Activated CD4-positive, alpha-beta memory T cell treated with anti-CD3 and anti-CD28 coated beads for 36 hours (primary cell): ENCODE measurements at regions of chr20 and their contacts with region 1.

Region 1: GRCh38 chr20:35092524-35093266 is at the start of gene TRPC4AP:
- DNase-seq: peak; percentile 93
- H3K4me3 Mint-ChIP-seq: peak within 1 kb of the TSS; percentile 84
- H3K27ac Mint-ChIP-seq: peak within 1 kb of the TSS; percentile 96
- H3K4me1 Mint-ChIP-seq: peaks cover 52% of the 10 kb centered on the region
- H3K27me3 Mint-ChIP-seq: no peaks in the 10 kb centered on the region
- total RNA-seq, gene TRPC4AP: 45.8 to 48.3 TPM

Region 2: DNA sequence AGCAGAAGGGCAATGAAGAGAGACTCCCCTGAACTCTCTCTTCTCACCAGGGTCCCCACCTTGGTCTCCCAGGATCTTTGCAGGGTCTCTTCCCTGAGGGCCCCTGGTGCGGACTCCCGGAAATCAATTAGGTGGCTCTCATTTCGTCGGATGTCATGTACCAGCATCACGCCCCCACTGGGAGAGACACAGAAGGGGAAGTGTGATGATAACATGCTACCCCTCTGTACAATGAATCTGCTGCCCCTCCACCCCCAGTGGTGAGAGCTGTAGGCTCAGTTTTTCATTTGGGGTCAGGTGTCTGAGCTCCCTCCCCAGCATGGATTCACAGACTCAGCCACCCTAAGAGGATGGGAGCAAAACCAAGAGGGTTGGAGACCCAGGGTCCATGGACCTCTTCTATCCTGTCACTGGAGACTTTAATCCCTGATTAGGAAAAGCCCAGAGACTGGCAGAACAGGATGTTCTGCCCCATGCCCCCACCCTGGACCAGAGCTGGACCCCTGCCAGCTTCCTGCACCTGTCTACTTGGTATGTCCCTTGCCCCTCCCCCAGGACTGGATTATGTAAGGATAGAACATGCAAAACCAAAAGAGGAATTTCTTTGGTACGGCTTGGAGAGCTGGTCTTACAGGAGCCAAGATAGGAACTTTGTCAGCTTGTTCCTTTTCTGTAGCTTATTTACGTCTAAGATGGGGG is 231.2 kb before region 1 on chr20:
- CTCF ChIA-PET with region 1: no interaction called
- POLR2A ChIA-PET with region 1: no interaction called
- intact Hi-C with region 1: no loop called
- DNase-seq: no peak
- H3K4me3 Mint-ChIP-seq: no peak overlapping the region
- H3K27ac Mint-ChIP-seq: no peak overlapping the region
- H3K4me1 Mint-ChIP-seq: no peaks in the 10 kb centered on the region
- H3K27me3 Mint-ChIP-seq: no peaks in the 10 kb centered on the region

Region 3: GRCh38 chr20:34891166-34892062 is 201.3 kb before region 1 on chr20:
- CTCF ChIA-PET with region 1: interaction called, 3 read pairs
- POLR2A ChIA-PET with region 1: no interaction called
- intact Hi-C with region 1: loop called (anchors 5 kb)
- DNase-seq: peak; percentile 60
- H3K4me3 Mint-ChIP-seq: peak overlapping the region; percentile 10
- H3K27ac Mint-ChIP-seq: peak overlapping the region; percentile 80
- H3K4me1 Mint-ChIP-seq: peaks cover 40% of the 10 kb centered on the region
- H3K27me3 Mint-ChIP-seq: no peaks in the 10 kb centered on the region

Region 4: DNA sequence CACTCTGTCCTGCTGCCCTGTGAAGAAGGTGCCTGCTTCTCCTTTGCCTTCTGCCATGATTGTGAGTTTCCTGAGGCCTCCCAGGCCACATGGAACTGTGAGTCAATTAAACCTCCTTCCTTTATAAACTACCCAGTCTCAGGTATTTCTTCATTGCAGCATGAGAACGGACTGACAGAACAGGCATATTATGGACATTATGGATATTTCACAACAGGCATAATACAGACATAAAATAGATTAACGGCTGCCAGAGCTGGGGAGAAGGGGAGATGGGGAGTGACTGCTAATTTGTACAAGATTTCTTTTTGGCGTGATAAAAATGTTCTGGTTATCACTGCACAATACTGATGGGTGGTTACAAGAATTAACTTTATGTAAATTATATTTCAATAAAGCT is 29.5 kb before region 1 on chr20:
- CTCF ChIA-PET with region 1: interaction called, 12 read pairs
- POLR2A ChIA-PET with region 1: no interaction called
- intact Hi-C with region 1: no loop called
- DNase-seq: no peak
- H3K4me3 Mint-ChIP-seq: no peak overlapping the region
- H3K27ac Mint-ChIP-seq: no peak overlapping the region
- H3K4me1 Mint-ChIP-seq: peaks cover 75% of the 10 kb centered on the region
- H3K27me3 Mint-ChIP-seq: no peaks in the 10 kb centered on the region

Region 5: GRCh38 chr20:35207950-35208611 is 115.4 kb after region 1 on chr20:
- CTCF ChIA-PET with region 1: interaction called, 64 read pairs
- POLR2A ChIA-PET with region 1: no interaction called
- intact Hi-C with region 1: loop called (anchors 1 kb)
- DNase-seq: peak; percentile 83
- H3K4me3 Mint-ChIP-seq: no peak overlapping the region
- H3K27ac Mint-ChIP-seq: no peak overlapping the region
- H3K4me1 Mint-ChIP-seq: no peaks in the 10 kb centered on the region
- H3K27me3 Mint-ChIP-seq: no peaks in the 10 kb centered on the region

Region 6: GRCh38 chr20:35303735-35304491 is 211.2 kb after region 1 on chr20:
- CTCF ChIA-PET with region 1: interaction called, 4 read pairs
- POLR2A ChIA-PET with region 1: no interaction called
- intact Hi-C with region 1: loop called (anchors 1 kb)
- DNase-seq: peak; percentile 92
- H3K4me3 Mint-ChIP-seq: no peak overlapping the region
- H3K27ac Mint-ChIP-seq: no peak overlapping the region
- H3K4me1 Mint-ChIP-seq: peaks cover 60% of the 10 kb centered on the region
- H3K27me3 Mint-ChIP-seq: no peaks in the 10 kb centered on the region